Motor neuron (in vitro differentiated cells): ENCODE measurements at regions of chr4 and their contacts with region 1.

Region 1: DNA sequence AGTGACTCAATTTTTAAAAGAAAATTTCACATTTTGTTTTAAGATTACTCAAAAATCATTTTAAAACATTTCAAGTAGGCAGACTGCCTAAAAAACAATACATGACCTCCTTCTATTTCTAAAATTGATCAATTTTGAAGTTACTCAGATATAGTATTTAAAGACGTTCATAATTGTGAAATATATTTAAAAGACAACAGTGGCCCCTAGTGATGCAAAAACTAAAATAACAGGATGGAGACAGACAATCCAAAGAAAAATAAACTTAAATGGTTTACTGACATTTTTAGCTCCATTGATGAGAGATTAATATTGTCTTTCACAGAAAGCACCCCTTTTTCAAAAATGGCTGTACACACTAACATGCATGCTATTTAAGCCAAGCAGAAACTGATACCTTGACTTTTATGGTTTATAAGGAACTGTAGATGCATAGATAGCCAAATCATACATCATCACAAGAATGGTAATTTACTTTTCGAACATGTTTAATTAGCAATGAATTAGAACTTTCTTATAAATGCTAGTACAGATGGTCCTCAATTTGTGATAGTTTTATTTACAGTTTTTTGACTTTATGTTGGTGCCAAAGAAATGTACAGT is 69.8 kb upstream of the FAT4 start:
- ATAC-seq: peak in 2 of 8 experiments; percentile 21 to 51
- H3K4me3 ChIP-seq: no peak overlapping the region
- H3K27ac ChIP-seq: no peak overlapping the region
- H3K4me1 ChIP-seq: no peaks in the 10 kb centered on the region

Region 2: DNA sequence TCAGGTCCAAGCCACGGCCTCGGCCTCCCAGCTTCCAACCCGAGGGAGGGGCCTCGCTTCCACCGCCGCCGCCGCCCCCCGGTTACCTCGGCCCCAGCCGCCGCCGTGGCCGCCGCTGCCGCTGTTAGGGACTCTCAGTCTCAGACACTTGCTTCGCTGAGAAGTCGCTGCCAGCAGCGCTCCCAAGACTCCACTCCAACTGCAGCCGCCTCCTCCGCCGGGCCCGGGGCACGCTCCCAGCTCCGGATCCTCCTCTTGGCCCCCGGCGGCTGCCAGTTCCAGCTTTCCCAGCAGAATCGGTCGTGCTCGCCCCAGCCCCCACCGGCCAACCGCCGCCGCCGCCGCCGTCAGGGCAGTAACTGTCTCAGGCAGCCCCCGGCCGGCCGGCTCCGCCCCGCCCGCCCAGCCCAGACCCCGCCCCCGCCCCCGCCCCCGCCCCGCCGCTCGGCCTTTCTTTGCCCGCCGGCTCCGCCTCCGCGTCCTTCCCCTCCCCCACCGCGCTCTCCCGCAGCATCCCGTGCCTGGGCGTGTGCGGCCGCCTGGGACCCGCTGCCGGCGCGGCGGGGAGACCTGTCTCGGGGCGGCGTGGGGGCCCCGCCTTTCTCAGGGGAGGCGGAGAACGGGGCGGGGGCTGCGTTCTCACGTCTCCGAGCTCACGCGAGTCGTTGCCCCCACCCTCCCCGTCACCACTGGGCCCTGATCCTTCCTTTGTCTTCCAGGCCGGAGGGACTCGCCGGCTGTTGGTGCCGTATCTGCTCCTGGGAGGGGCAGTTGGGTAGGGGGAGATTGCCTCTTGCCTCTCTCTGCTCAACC is 532.4 kb before region 1 on chr4 and contains the start of gene ANKRD50:
- in situ Hi-C with region 1: loop called in 2 of 9 experiments (anchors 25 kb)
- ATAC-seq: peak; percentile 62 to 85 (median 77)
- H3K4me3 ChIP-seq: peak within 1 kb of the TSS; percentile 65 to 76 (median 72)
- H3K27ac ChIP-seq: peak within 1 kb of the TSS; percentile 96 to 99
- H3K4me1 ChIP-seq: peaks cover 6 to 15% of the 10 kb centered on the region in 2 donors
- total RNA-seq, gene ANKRD50: 12.3 to 54.3 (median 23.6) TPM

Region 3: DNA sequence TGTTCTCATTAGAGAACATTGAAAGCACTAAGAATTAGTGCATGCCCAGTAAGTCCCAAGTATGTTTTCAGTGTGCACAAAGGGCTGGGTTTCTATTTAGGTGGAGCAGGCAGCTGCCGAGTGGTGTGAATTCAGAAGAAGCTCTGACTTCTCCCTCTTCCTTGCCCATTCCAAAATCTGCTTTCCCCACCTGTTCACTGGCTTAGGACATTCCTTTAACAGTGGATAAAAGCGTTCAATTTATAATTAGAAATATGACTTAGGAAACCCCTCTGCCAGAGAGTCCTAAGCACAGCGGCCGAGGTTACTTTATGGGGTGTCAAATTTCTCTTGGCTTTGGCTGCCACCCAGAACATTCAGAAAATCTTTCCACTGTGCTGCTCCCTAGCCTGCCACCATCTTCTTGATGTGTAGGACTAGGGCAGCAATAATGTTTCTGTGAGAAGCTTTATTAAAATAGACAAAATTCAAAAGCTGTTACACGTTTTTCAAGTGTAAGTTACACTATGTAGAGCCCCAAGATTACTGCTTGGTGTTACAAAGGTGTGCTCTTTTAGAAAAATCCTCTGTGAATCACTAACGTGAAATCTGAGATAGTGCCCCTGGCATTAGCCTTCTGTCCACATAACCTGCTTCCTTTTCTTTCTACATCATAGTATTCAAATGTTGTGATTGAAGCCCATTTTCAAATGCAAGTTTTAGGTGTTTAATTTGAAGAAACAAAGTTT is 340.8 kb before region 1 on chr4:
- in situ Hi-C with region 1: loop called in 1 of 9 experiments (anchors 25 kb)
- ATAC-seq: peak in 4 of 8 experiments; percentile 61 to 93 (median 86)
- H3K4me3 ChIP-seq: no peak overlapping the region
- H3K27ac ChIP-seq: no peak overlapping the region
- H3K4me1 ChIP-seq: peaks cover 7 to 18% of the 10 kb centered on the region in 2 donors

Region 4: GRCh38 chr4:124993838-124994237 is 251.1 kb before region 1 on chr4:
- in situ Hi-C with region 1: no loop called
- ATAC-seq: no peak
- H3K4me3 ChIP-seq: no peak overlapping the region
- H3K27ac ChIP-seq: no peak overlapping the region
- H3K4me1 ChIP-seq: no peaks in the 10 kb centered on the region